ENCODE measurements at regions of chr3 and their contacts with region 1.

Region 1: GRCh38 chr3:178443634-178444033 is 92.6 kb upstream of the KCNMB2 start:
- DNase-seq: peak; percentile 34
- H3K4me3 ChIP-seq: no peak overlapping the region
- H3K27ac ChIP-seq: no peak overlapping the region
- H3K4me1 ChIP-seq: no peaks in the 10 kb centered on the region
- H3K27me3 ChIP-seq: peaks cover 0 to 2% of the 10 kb centered on the region in 2 experiments
- CTCF ChIP-seq: no peak
- POLR2A ChIP-seq: no peak

Region 2: GRCh38 chr3:178705925-178706324 is 262.3 kb after region 1 on chr3:
- CTCF ChIA-PET with region 1: no interaction called
- POLR2A ChIA-PET with region 1: no interaction called
- dilution Hi-C with region 1: no loop called
- intact Hi-C with region 1: no loop called
- DNase-seq: no peak
- H3K4me3 ChIP-seq: no peak overlapping the region
- H3K27ac ChIP-seq: no peak overlapping the region
- H3K4me1 ChIP-seq: no peaks in the 10 kb centered on the region
- H3K27me3 ChIP-seq: no peaks in the 10 kb centered on the region
- CTCF ChIP-seq: no peak
- POLR2A ChIP-seq: no peak

Region 3: DNA sequence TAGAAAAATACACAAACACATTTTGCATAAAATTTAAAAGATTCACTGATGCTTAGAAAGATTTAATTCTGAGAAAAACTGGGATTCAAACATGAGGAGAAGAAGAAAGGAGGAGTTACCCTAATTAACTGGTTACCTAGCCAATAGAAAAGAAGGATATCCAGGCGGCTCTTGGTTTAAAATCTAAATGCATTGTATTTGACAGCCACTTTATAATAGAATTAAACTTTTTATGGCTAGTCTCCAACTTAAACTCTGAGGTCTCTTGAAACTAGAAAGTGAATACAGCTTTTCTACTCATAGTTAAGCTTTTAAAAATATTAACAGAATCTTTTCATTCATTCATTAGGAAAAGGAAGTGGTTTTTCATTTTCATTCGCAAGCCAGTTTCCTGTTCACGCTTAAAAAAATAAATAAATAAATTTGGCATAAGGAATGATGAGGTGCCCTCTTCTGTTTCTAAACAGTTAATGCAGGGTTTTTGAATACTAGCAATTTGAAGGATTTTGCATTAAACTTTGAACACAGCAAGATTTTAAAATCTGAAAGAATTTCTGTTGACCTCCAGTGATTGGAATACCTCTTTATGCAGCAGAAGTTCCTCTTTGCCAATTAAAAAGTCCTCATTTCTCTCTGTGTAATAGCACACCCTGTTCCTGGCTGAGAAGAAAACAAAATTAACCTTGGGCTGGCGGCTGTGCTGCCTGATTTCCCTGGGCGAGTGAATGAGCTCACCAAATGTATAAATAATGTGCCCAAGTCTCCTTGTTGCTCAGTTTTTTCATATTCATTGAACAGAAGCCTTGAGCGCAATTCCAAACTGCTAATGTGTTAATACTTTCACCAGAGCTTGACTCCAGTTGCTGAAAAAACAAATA is 522.9 kb after region 1 on chr3:
- CTCF ChIA-PET with region 1: interaction called, 38 read pairs
- POLR2A ChIA-PET with region 1: no interaction called
- dilution Hi-C with region 1: no loop called
- intact Hi-C with region 1: no loop called
- DNase-seq: peak; percentile 72
- H3K4me3 ChIP-seq: peak overlapping the region in 1 of 3 experiments; percentile 38
- H3K27ac ChIP-seq: peak overlapping the region; percentile 35
- H3K4me1 ChIP-seq: peaks cover 16% of the 10 kb centered on the region
- H3K27me3 ChIP-seq: no peaks in the 10 kb centered on the region
- CTCF ChIP-seq: peak in 1 of 2 donors; percentile 29
- POLR2A ChIP-seq: no peak